A673 (cell line): ENCODE measurements at regions of chr16 and their contacts with region 1.

Region 1: DNA sequence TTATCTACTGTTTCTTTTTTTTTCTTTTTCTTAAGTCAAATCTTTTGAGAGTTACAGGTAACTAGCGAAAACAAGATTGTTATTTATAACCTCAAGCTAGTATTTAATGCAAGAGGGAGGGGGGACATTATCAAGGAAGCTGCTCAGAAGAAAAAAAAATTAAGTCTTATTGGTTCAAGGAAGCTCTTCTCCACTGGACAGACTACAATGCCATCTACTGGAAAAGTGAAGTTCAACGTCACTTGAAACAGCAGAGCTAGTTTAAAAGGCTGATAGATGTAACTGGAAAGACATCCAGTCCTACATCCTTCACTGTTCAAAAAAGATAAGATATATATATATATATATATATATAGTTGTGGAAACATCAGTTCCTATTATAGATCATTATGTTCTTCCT is 418.0 kb upstream of the PSMD7 start:
- DNase-seq: peak; percentile 65
- H3K4me3 ChIP-seq: no peak overlapping the region
- H3K27ac ChIP-seq: no peak overlapping the region
- H3K4me1 ChIP-seq: no peaks in the 10 kb centered on the region
- H3K27me3 ChIP-seq: peaks cover 91% of the 10 kb centered on the region
- CTCF ChIP-seq: peak; percentile 59

Region 2: GRCh38 chr16:72124761-72125634 is 1753.6 kb before region 1 on chr16:
- CTCF ChIA-PET with region 1: no interaction called
- POLR2A ChIA-PET with region 1: no interaction called
- intact Hi-C with region 1: loop called (anchors 5 kb)
- DNase-seq: peak; percentile 81
- H3K4me3 ChIP-seq: no peak overlapping the region
- H3K27ac ChIP-seq: no peak overlapping the region
- H3K4me1 ChIP-seq: peaks cover 5% of the 10 kb centered on the region
- H3K27me3 ChIP-seq: no peaks in the 10 kb centered on the region
- CTCF ChIP-seq: peak; percentile 81

Region 3: GRCh38 chr16:73697336-73697735 is 181.3 kb before region 1 on chr16:
- CTCF ChIA-PET with region 1: interaction called, 10 read pairs
- POLR2A ChIA-PET with region 1: interaction called, 4 read pairs
- intact Hi-C with region 1: no loop called
- DNase-seq: no peak
- H3K4me3 ChIP-seq: no peak overlapping the region
- H3K27ac ChIP-seq: no peak overlapping the region
- H3K4me1 ChIP-seq: no peaks in the 10 kb centered on the region
- H3K27me3 ChIP-seq: peaks cover 38% of the 10 kb centered on the region
- CTCF ChIP-seq: no peak